CD4-positive, alpha-beta T cell (primary cell): ENCODE measurements at regions of chr4 and their contacts with region 1.

Region 1: GRCh38 chr4:10438924-10439323 is 18.3 kb downstream of the ZNF518B start:
- DNase-seq: no peak
- ATAC-seq: no peak
- H3K4me3 ChIP-seq: no peak overlapping the region
- H3K4me3 Mint-ChIP-seq: no peak overlapping the region
- H3K27ac ChIP-seq: no peak overlapping the region
- H3K27ac Mint-ChIP-seq: no peak overlapping the region
- H3K4me1 ChIP-seq: no peaks in the 10 kb centered on the region
- H3K4me1 Mint-ChIP-seq: no peaks in the 10 kb centered on the region
- H3K27me3 ChIP-seq: no peaks in the 10 kb centered on the region
- H3K27me3 Mint-ChIP-seq: no peaks in the 10 kb centered on the region
- CTCF ChIP-seq: no peak

Region 2: DNA sequence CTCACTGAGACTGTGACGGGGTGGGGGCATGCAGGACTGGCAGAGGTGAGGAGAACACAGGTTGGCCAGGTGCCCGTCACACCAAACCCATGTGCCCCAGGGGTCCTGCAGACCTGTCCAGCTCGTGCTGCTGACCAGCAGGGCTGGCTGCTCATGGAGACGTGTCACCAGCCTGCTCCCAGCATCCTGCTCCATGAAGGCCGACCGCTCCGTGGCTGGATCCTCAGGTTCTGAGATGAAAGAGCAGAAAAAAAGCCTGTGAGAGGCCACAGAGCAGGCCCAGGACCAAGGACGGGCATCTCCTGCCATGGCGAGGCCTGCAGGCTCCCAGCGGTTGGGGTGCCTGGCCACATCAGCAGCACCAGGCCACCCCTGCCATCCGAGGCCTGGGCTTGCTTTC is 729.2 kb before region 1 on chr4:
- CTCF ChIA-PET with region 1: no interaction called
- POLR2A ChIA-PET with region 1: no interaction called
- intact Hi-C with region 1: no loop called
- DNase-seq: no peak
- ATAC-seq: no peak
- H3K4me3 ChIP-seq: no peak overlapping the region
- H3K4me3 Mint-ChIP-seq: no peak overlapping the region
- H3K27ac ChIP-seq: no peak overlapping the region
- H3K27ac Mint-ChIP-seq: no peak overlapping the region
- H3K4me1 ChIP-seq: no peaks in the 10 kb centered on the region
- H3K4me1 Mint-ChIP-seq: no peaks in the 10 kb centered on the region
- H3K27me3 ChIP-seq: no peaks in the 10 kb centered on the region
- H3K27me3 Mint-ChIP-seq: no peaks in the 10 kb centered on the region
- CTCF ChIP-seq: no peak

Region 3: GRCh38 chr4:9832640-9833308 is 606.1 kb before region 1 on chr4:
- CTCF ChIA-PET with region 1: no interaction called
- POLR2A ChIA-PET with region 1: no interaction called
- intact Hi-C with region 1: no loop called
- DNase-seq: no peak
- ATAC-seq: no peak
- H3K4me3 ChIP-seq: no peak overlapping the region
- H3K4me3 Mint-ChIP-seq: no peak overlapping the region
- H3K27ac ChIP-seq: no peak overlapping the region
- H3K27ac Mint-ChIP-seq: no peak overlapping the region
- H3K4me1 ChIP-seq: no peaks in the 10 kb centered on the region
- H3K4me1 Mint-ChIP-seq: no peaks in the 10 kb centered on the region
- H3K27me3 ChIP-seq: no peaks in the 10 kb centered on the region
- H3K27me3 Mint-ChIP-seq: peaks cover 6% of the 10 kb centered on the region
- CTCF ChIP-seq: no peak

Region 4: DNA sequence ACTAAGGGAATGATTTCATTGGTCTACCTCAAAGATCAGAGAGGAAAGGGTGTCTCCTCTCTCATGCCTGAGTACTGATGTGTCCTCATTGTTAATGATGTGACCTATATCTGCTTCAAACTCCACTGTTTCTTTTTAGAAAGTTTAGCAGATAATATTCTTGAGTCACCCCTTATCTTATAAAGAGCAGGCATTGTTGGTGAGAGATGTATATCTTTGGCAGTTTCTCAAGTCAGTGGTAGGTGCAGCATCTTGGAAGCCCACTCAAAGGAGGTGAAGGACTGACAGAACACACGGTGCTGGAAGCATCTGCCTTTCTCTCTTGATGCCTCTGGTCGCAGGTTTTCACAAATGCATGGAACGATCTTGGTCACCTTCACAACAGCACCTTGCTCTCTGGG is 52.9 kb before region 1 on chr4:
- CTCF ChIA-PET with region 1: no interaction called
- POLR2A ChIA-PET with region 1: no interaction called
- intact Hi-C with region 1: no loop called
- DNase-seq: no peak
- ATAC-seq: no peak
- H3K4me3 ChIP-seq: no peak overlapping the region
- H3K4me3 Mint-ChIP-seq: no peak overlapping the region
- H3K27ac ChIP-seq: no peak overlapping the region
- H3K27ac Mint-ChIP-seq: no peak overlapping the region
- H3K4me1 ChIP-seq: no peaks in the 10 kb centered on the region
- H3K4me1 Mint-ChIP-seq: no peaks in the 10 kb centered on the region
- H3K27me3 ChIP-seq: no peaks in the 10 kb centered on the region
- H3K27me3 Mint-ChIP-seq: peaks cover 4% of the 10 kb centered on the region
- CTCF ChIP-seq: no peak

Region 5: GRCh38 chr4:10480616-10481015 is 41.7 kb after region 1 on chr4:
- CTCF ChIA-PET with region 1: no interaction called
- POLR2A ChIA-PET with region 1: no interaction called
- intact Hi-C with region 1: loop called in 1 of 2 experiments (anchors 5 kb)
- DNase-seq: no peak
- ATAC-seq: no peak
- H3K4me3 ChIP-seq: no peak overlapping the region
- H3K4me3 Mint-ChIP-seq: no peak overlapping the region
- H3K27ac ChIP-seq: no peak overlapping the region
- H3K27ac Mint-ChIP-seq: no peak overlapping the region
- H3K4me1 ChIP-seq: no peaks in the 10 kb centered on the region
- H3K4me1 Mint-ChIP-seq: no peaks in the 10 kb centered on the region
- H3K27me3 ChIP-seq: no peaks in the 10 kb centered on the region
- H3K27me3 Mint-ChIP-seq: peaks cover 6% of the 10 kb centered on the region
- CTCF ChIP-seq: no peak

Region 6: GRCh38 chr4:11069083-11069482 is 630.2 kb after region 1 on chr4:
- CTCF ChIA-PET with region 1: no interaction called
- POLR2A ChIA-PET with region 1: no interaction called
- intact Hi-C with region 1: no loop called
- DNase-seq: no peak
- ATAC-seq: no peak
- H3K4me3 ChIP-seq: no peak overlapping the region
- H3K4me3 Mint-ChIP-seq: no peak overlapping the region
- H3K27ac ChIP-seq: no peak overlapping the region
- H3K27ac Mint-ChIP-seq: no peak overlapping the region
- H3K4me1 ChIP-seq: no peaks in the 10 kb centered on the region
- H3K4me1 Mint-ChIP-seq: no peaks in the 10 kb centered on the region
- H3K27me3 ChIP-seq: no peaks in the 10 kb centered on the region
- H3K27me3 Mint-ChIP-seq: no peaks in the 10 kb centered on the region
- CTCF ChIP-seq: no peak